CD8-positive, alpha-beta memory T cell (primary cell): ENCODE measurements at regions of chr2 and their contacts with region 1.

Region 1: GRCh38 chr2:68487773-68488355 is 20.5 kb downstream of the APLF start:
- DNase-seq: no peak
- H3K4me3 ChIP-seq: no peak overlapping the region
- H3K4me3 Mint-ChIP-seq: no peak overlapping the region
- H3K27ac ChIP-seq: no peak overlapping the region
- H3K27ac Mint-ChIP-seq: no peak overlapping the region
- H3K4me1 ChIP-seq: no peaks in the 10 kb centered on the region
- H3K4me1 Mint-ChIP-seq: peaks cover 2 to 5% (median 4%) of the 10 kb centered on the region in 3 donors
- H3K27me3 ChIP-seq: no peaks in the 10 kb centered on the region
- H3K27me3 Mint-ChIP-seq: no peaks in the 10 kb centered on the region

Region 2: DNA sequence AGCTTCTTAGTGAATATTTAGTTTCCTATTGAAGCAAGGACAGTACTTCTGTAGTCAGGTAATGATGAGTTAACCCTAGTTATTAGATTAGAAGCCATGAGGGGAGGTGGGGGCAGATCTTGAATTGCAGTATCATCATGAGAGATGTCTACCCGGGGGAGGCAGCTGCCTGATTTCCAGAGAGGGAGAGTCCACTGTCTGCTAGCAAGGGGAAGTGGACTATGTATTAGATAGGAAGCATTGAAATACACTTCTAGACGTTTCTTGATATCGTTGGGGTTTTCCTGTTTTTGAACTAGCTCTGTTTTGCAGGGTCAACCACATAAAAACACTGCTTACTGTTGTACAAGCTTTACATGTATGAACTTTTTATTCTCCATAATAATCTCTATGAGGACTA is 18.3 kb after region 1 on chr2:
- CTCF ChIA-PET with region 1: interaction called, 18 read pairs
- POLR2A ChIA-PET with region 1: interaction called, 3 read pairs
- DNase-seq: no peak
- H3K4me3 ChIP-seq: no peak overlapping the region
- H3K4me3 Mint-ChIP-seq: peak overlapping the region in 6 of 7 donors; percentile 30 to 73 (median 56)
- H3K27ac ChIP-seq: no peak overlapping the region
- H3K27ac Mint-ChIP-seq: peak overlapping the region; percentile 1 to 90 (median 72)
- H3K4me1 ChIP-seq: peaks cover 14% of the 10 kb centered on the region
- H3K4me1 Mint-ChIP-seq: peaks cover 21 to 25% (median 24%) of the 10 kb centered on the region in 3 donors
- H3K27me3 ChIP-seq: no peaks in the 10 kb centered on the region
- H3K27me3 Mint-ChIP-seq: no peaks in the 10 kb centered on the region

Region 3: GRCh38 chr2:68594674-68595492 is 107.0 kb after region 1 on chr2:
- CTCF ChIA-PET with region 1: interaction called, 25 read pairs
- POLR2A ChIA-PET with region 1: no interaction called
- DNase-seq: peak; percentile 33 to 67 (median 40)
- H3K4me3 ChIP-seq: no peak overlapping the region
- H3K4me3 Mint-ChIP-seq: peak overlapping the region in 5 of 7 donors; percentile 3 to 57 (median 23)
- H3K27ac ChIP-seq: no peak overlapping the region
- H3K27ac Mint-ChIP-seq: peak overlapping the region in 4 of 8 donors; percentile 1 to 22 (median 6)
- H3K4me1 ChIP-seq: peaks cover 5% of the 10 kb centered on the region
- H3K4me1 Mint-ChIP-seq: peaks cover 3 to 13% (median 12%) of the 10 kb centered on the region in 3 donors
- H3K27me3 ChIP-seq: no peaks in the 10 kb centered on the region
- H3K27me3 Mint-ChIP-seq: peaks cover 1 to 15% of the 10 kb centered on the region in 2 donors